ENCODE measurements at regions of chr5 and their contacts with region 1.

Region 1: DNA sequence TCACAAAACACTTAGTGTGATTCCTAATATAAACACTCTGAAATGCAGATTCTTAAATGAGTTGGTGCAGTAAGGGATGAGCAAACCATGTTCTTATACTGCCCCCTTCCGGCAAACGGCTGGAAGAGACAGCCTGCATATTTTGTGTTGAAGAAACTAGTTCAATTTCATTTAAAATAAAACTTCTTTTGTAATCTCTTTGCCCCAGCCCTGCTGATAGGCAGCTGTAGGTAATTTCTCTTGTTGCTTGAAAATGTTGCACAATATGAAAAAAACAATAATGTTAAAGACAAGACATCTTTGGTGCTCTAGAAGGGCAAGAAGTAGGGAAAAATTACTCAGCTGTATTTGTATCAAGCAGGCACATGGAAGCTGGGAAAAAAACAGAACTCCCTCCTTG is 89.7 kb upstream of the CCNG1 start:
- H3K4me3 ChIP-seq: no peak overlapping the region
- H3K27ac ChIP-seq: no peak overlapping the region
- H3K4me1 ChIP-seq: no peaks in the 10 kb centered on the region
- CTCF ChIP-seq: no peak

Region 2: GRCh38 chr5:163079618-163080017 is 268.1 kb before region 1 on chr5:
- CTCF ChIA-PET with region 1: interaction called, 13 read pairs
- POLR2A ChIA-PET with region 1: no interaction called
- H3K4me3 ChIP-seq: no peak overlapping the region
- H3K27ac ChIP-seq: no peak overlapping the region
- H3K4me1 ChIP-seq: no peaks in the 10 kb centered on the region
- CTCF ChIP-seq: no peak

Region 3: DNA sequence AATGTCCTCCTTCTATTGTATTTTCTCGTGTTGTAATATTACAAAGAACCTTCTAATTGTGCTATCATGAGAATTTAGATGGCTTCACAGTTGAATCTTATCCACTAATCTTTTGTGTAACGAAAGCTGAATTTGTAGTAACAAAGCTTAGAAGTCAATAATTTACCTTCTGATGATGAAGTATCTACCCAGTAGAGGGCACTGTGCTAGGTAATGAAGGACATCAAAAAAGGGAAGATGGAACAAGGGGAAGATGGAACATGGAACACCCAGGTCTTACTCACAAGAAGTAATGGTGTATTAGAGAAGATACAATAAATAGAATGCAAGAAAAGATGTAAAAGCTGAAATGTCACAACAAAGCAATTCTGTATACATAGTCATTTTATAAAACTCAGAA is 41.2 kb before region 1 on chr5:
- CTCF ChIA-PET with region 1: interaction called, 21 read pairs
- POLR2A ChIA-PET with region 1: no interaction called
- H3K4me3 ChIP-seq: no peak overlapping the region
- H3K27ac ChIP-seq: no peak overlapping the region
- H3K4me1 ChIP-seq: no peaks in the 10 kb centered on the region
- CTCF ChIP-seq: no peak

Region 4: DNA sequence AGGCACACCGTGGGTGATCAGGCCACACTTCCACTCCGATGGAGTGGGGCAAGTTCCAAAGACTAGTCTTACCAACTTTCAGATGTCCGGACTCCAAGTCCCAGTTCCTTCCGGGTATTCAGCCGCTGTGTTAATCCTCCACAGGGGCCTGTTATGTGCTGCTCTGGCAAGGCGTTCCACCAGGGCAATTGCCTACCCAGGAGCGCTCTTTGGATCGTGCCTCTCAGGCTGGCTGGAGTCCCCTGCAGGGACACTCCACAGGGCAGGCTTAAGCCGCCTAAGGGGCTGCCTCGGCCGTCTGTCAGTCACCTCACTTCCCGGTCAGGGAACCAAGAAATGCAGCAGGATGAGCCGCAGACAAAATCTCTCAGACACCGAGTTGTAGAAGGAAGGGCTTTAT is 29.0 kb before region 1 on chr5:
- CTCF ChIA-PET with region 1: interaction called, 10 read pairs
- POLR2A ChIA-PET with region 1: no interaction called
- H3K4me3 ChIP-seq: no peak overlapping the region
- H3K27ac ChIP-seq: no peak overlapping the region
- H3K4me1 ChIP-seq: no peaks in the 10 kb centered on the region
- CTCF ChIP-seq: no peak

Region 5: DNA sequence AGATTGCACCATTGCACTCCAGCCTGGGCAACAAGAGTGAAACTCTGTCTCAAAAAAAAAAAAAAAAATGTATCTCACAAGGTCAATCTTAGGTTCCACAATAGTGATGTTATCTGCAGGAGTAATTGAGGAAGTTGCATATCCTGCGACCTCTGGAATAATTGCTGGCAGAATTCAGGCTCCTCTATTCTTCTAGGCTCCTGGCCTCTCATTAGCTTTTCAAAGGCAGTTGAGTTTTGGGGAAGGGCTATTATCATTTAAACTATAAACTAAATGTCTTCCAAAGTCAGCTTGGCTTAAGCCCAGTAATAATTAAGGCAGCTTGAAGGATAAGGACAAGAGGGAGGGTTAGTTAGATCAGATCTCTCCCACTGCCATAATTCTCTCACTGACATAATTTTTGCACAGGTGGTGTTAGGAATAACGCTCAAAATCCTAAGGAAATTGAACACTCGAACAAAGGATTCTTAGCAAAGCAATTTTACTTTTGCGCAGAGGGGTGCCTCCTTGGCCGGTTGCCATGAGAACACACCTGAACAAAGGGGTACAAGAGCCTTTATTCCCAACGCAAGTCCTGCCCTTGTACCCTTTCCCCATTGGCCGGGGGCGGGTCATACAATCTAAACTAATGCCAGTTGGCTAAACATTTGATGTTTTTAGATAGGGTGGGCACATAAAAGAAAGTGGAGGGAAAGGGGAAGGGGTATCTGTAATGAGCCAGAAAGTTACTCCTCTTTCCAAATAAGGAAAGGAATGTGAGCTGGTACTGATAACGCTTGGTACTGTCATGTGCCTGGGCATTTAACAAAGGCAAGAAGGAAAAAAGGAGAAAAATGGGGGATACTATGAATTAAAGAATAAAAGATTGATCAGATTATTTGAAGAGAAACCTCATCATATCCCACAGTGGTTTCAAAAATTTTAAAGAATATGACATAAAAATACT is 16.7 kb before region 1 on chr5:
- CTCF ChIA-PET with region 1: interaction called, 11 read pairs
- POLR2A ChIA-PET with region 1: no interaction called
- H3K4me3 ChIP-seq: no peak overlapping the region
- H3K27ac ChIP-seq: no peak overlapping the region
- H3K4me1 ChIP-seq: no peaks in the 10 kb centered on the region
- CTCF ChIP-seq: no peak

Region 6: DNA sequence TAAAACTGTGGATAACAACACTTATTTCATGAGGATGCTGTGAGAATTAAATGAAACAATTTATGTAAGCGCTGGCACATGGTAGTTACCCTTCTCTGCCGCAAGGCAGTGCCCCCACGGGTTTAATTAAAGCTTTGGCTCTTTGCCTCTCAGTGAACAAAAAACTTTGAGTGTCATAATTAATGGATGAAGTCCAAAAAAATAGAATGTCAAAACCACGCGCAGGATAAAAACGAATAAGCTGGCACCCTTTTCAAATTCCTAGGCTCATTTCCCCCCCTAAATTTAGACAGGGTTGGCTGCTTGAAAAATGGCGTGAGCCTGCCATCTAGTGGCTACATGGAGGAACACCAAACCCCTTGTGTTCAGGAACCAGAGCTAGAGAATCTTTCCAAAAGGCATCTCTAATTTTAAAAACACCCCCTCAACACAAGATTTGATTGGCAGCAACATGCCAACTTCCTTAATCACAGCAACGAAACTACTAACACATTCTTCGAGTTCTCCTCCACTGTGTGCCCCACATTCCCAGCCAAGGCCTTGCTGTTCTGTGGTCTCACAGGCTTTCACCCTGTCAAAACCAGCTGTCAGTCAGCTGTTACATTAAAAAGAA is 60.7 kb after region 1 on chr5:
- CTCF ChIA-PET with region 1: interaction called, 27 read pairs
- POLR2A ChIA-PET with region 1: no interaction called
- H3K4me3 ChIP-seq: no peak overlapping the region
- H3K27ac ChIP-seq: no peak overlapping the region
- H3K4me1 ChIP-seq: no peaks in the 10 kb centered on the region
- CTCF ChIP-seq: peak; percentile 80

Measured in HEK293 (cell line).